HepG2 (cell line): ENCODE measurements at regions of chr2 and their contacts with region 1.

Region 1: GRCh38 chr2:38740851-38741731 is 10.1 kb downstream of the SRSF7 start:
- DNase-seq: peak; percentile 60
- ATAC-seq: peak; percentile 39
- H3K4me3 ChIP-seq: peak overlapping the region in 1 of 3 experiments; percentile 10; a peak in 2 of 6 replicates
- H3K27ac ChIP-seq: peak overlapping the region; percentile 71
- H3K4me1 ChIP-seq: peaks cover 57% of the 10 kb centered on the region
- H3K27me3 ChIP-seq: no peaks in the 10 kb centered on the region
- CTCF ChIP-seq: peak; percentile 61
- EP300 ChIP-seq: no peak
- POLR2A ChIP-seq: no peak
- RAD21 ChIP-seq: 0 out of 2 replicates have a peak, but pooled peaks have one; percentile 36

Region 2: GRCh38 chr2:38535744-38536506 is 205.2 kb before region 1 on chr2:
- CTCF ChIA-PET with region 1: interaction called, 17 read pairs
- POLR2A ChIA-PET with region 1: interaction called, 5 read pairs
- in situ Hi-C with region 1: loop called (anchors 5 kb)
- intact Hi-C with region 1: no loop called
- DNase-seq: peak; percentile 67
- ATAC-seq: peak; percentile 86
- H3K4me3 ChIP-seq: peak overlapping the region; percentile 65 to 78 (median 67)
- H3K27ac ChIP-seq: no peak overlapping the region
- H3K4me1 ChIP-seq: peaks cover 55% of the 10 kb centered on the region
- H3K27me3 ChIP-seq: 0 out of 5 replicates have a peak, but pooled peaks cover 0 to 1% of the 10 kb centered on the region in 2 experiments
- CTCF ChIP-seq: peak; percentile 100
- EP300 ChIP-seq: no peak
- POLR2A ChIP-seq: no peak
- RAD21 ChIP-seq: peak; percentile 98

Region 3: DNA sequence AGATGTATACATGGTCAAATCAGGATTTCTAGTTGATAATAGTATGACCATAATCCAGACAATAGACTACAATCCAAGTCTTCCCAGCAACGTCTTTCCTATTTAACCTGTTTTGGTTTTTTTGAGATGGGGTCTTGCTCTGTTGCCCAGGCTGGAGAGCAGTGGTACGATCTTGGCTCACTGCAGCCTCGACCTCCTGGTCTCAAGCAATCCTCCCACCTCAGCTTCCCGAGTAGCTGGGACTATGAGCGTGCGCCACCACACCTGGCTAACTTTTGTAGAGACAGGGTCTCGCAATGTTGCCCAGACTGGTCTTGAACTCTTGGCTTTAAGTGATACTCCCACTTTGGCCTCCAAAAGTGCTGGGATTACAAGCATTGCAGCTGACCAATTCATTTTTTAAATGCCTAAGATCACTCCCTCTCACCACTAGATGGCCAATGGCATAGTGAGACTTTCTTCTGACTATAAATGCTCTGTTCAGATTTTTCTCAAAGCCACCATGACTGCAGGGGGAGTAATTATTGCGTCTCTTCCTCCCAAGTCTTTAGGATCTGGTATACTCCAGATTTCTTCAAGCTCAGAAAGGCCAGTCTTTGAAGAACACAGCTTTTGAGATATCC is 186.0 kb before region 1 on chr2:
- CTCF ChIA-PET with region 1: no interaction called
- POLR2A ChIA-PET with region 1: no interaction called
- in situ Hi-C with region 1: no loop called
- intact Hi-C with region 1: no loop called
- DNase-seq: peak; percentile 50
- ATAC-seq: peak; percentile 71
- H3K4me3 ChIP-seq: no peak overlapping the region
- H3K27ac ChIP-seq: no peak overlapping the region
- H3K4me1 ChIP-seq: no peaks in the 10 kb centered on the region
- H3K27me3 ChIP-seq: no peaks in the 10 kb centered on the region
- CTCF ChIP-seq: peak; percentile 48
- EP300 ChIP-seq: no peak
- POLR2A ChIP-seq: no peak; a peak in 1 of 4 replicates
- RAD21 ChIP-seq: 0 out of 2 replicates have a peak, but pooled peaks have one; percentile 28

Region 4: GRCh38 chr2:38835015-38835601 is 94.0 kb after region 1 on chr2:
- CTCF ChIA-PET with region 1: no interaction called
- POLR2A ChIA-PET with region 1: no interaction called
- in situ Hi-C with region 1: no loop called
- intact Hi-C with region 1: loop called (anchors 10 kb)
- DNase-seq: peak; percentile 55
- ATAC-seq: peak; percentile 67
- H3K4me3 ChIP-seq: no peak overlapping the region
- H3K27ac ChIP-seq: no peak overlapping the region
- H3K4me1 ChIP-seq: no peaks in the 10 kb centered on the region
- H3K27me3 ChIP-seq: no peaks in the 10 kb centered on the region
- CTCF ChIP-seq: peak; percentile 69
- EP300 ChIP-seq: no peak
- POLR2A ChIP-seq: no peak
- RAD21 ChIP-seq: no peak